ENCODE measurements at regions of chr17 and their contacts with region 1.

Region 1: DNA sequence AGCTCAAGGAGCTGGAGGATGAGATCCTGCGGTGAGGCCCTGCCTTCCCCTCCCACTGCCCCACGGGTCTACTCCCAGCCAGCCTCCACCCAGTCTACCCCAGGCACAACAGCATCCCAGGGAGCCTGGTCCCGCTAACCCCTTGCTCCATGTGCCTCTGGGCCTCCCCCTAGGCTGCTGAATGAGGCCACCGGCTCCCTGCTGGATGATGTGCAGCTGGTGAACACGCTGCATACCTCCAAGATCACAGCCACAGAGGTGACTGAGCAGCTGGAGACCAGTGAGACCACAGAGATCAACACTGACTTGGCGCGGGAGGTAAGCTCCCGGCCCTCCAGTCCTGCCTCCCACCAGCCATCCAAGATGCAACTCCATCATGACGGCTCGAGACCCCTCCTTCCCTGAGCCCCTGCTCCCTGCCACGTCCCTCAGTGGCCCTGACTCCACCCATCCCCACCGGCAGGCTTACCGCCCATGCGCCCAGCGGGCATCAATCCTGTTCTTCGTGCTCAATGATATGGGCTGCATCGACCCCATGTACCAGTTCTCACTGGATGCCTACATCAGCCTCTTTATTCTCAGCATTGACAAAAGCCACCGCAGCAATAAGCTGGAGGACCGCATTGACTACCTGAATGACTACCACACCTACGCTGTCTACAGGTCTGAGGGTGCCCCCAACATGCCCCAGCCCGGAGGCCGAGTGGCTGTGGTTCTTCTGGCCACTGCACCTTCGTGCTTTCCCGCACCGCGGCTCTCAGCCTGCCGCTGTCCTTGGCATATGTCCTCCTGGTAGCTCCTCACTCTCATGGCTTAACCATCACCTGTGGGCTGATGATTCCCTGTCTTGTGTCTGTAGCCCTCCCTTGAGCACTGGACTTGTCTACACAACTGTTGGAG is 15.0 kb upstream of the KDM6B start:
- DNase-seq: no peak
- ATAC-seq: no peak
- H3K4me3 Mint-ChIP-seq: no peak overlapping the region
- H3K27ac Mint-ChIP-seq: no peak overlapping the region
- H3K4me1 Mint-ChIP-seq: no peaks in the 10 kb centered on the region
- H3K27me3 Mint-ChIP-seq: peaks cover 2% of the 10 kb centered on the region

Region 2: GRCh38 chr17:7763919-7764318 is 55.1 kb before region 1 on chr17:
- CTCF ChIA-PET with region 1: no interaction called
- POLR2A ChIA-PET with region 1: no interaction called
- DNase-seq: no peak
- ATAC-seq: no peak
- H3K4me3 Mint-ChIP-seq: no peak overlapping the region
- H3K27ac Mint-ChIP-seq: no peak overlapping the region
- H3K4me1 Mint-ChIP-seq: peaks cover 5% of the 10 kb centered on the region
- H3K27me3 Mint-ChIP-seq: no peaks in the 10 kb centered on the region

Region 3: DNA sequence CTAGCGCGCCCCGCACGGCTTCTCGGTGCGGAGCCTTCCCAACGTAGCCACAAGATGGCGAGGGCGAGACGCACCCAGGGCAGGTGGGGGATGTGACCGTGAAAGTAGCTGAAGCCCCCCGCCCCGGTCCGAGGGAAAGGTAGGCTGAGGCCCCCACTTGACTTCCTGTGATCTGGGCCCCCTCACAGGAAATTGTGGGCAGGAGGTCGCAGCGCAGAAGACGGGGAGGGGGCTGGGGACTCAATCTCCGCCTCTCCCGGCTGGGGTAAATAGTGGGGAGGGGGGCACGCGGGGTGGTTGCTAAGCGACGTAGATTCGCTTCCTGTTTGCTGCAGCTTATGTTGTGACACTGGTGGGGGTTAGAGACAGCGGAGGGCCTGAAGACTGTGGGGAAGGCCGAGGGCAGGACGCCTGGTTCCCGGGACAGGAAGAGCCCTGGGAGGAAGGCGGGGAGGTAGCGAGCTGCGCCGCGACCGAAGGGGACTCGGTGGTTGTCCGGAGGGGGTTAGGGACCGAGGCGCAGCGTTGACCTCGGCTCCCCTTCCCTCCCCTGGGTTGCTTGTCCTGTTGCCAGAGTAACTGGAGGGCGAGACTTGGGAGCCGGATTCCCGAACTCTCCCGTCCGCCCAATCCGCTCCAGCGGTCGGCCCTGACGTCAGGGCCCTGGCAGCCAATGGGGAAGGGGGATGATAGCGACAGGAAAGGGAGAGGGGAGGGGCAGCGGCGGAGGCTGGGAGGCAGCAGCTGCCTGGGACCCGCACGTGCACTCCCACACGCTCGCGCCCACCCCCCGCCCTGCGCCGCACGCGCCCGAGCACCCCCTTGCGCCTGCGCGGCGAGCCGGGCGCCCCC is 16.2 kb after region 1 on chr17:
- CTCF ChIA-PET with region 1: interaction called, 52 read pairs
- POLR2A ChIA-PET with region 1: no interaction called
- DNase-seq: peak; percentile 91
- ATAC-seq: peak; percentile 56
- H3K4me3 Mint-ChIP-seq: peak overlapping the region; percentile 90
- H3K27ac Mint-ChIP-seq: peak overlapping the region; percentile 94
- H3K4me1 Mint-ChIP-seq: peaks cover 55% of the 10 kb centered on the region
- H3K27me3 Mint-ChIP-seq: peaks cover 8% of the 10 kb centered on the region